GM10248 (cell line): ENCODE measurements at regions of chr7 and their contacts with region 1.

Region 1: DNA sequence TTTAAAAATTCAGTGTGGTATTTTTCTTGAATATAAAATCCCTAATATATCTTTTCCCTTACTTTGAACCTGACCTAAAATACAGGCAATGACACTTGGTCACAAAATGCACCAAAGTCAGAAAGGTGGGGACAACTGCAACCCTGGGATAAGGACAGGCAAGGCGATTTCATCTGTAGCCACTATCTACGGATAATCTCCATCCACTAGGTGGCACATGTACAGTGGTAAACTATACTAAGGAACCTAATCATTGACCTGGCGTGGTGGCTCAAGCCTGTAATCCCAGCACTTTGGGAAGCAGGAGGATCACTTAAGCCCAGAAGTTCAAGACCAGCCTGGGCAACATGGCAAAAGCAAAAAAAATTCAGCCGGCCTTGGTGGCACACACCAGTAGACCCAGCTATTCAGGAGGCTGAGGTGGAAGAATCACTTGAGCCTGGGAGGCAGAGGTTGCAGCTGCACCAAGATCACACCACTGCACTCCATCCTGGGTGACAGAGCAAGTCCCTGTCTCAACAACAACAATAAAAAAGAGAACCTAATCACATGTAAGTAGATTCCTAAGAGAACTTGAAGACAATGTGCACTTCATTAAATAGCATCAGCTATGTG is 98.9 kb downstream of the KMT2C start:
- DNase-seq: peak; percentile 35
- CTCF ChIP-seq: peak; percentile 62

Region 2: DNA sequence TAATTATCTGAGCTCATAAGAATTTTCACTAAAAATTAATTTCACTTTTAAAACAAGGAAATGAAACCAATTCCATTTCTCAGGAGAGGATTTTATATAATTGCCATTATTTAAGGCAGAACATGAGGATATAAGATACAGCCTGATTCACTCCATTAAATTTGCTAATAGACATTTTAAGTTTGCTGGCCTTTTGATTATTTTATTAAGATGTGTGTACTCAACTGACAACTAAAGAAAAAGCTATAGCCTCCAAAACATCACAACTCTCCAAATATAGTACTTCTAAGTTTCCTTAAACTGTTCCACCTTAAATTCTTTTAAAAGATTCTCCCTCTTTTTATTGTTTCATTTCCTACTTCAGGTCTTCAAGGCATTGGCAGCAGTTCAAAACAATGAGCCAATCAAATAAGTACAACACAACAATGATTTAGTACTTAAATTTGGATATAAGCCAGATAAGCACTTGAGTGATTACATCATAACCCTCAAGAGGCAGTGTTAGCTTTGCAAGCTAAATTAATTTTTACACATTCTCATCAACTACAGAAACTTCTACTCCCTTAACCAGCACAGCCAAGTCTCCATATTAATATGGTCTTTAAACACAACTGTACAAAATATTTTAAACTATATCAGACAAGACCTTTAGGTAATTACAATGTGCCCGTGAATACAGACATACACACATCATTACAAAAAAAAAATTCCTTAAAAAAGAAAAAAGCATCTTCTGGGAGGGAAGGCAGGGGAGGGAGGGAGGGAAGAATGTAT is 22.8 kb before region 1 on chr7:
- CTCF ChIA-PET with region 1: interaction called, 16 read pairs
- POLR2A ChIA-PET with region 1: no interaction called
- DNase-seq: no peak
- CTCF ChIP-seq: no peak

Region 3: GRCh38 chr7:152392254-152392653 is 55.4 kb after region 1 on chr7:
- CTCF ChIA-PET with region 1: interaction called, 11 read pairs
- POLR2A ChIA-PET with region 1: no interaction called
- DNase-seq: no peak
- CTCF ChIP-seq: no peak

Region 4: DNA sequence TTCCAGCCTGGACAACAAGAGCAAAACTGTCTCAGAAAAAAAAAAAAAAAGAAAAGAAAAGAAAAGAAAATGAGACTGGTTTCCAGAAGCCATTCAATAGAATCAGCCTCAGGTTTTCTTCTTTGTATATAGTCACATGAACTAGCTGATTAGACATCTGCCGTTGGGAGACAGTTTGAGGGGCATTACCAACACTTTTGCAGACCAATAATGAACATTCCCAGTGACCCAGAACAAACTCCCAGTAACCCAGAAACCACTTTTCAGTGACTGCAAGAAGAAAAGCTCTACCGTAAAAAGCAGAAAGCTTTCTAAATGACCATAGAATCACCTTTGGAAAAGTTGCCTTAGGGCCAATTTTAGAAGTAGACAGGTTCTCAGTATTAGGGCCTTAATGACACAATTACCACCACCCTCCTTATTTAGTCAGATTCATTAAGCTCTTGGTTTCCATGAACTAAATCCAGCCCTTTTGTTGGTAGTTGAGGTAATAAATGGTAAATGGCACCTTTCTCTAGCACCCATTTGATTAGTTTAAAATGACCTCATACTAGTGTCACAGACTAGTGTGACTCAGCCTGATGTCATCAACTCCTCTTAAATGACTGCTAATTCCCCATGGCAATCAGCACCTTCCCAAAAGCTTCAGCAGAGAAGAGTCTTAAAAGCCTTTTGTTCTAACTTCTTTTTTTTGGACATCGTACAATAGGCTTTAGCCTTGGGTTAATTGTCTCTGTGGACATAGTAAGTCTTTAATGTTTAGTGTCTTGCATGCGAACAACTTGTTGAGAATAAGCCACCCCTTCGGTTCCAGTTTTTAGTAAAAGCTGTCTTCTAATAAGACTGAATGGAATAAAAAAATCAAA is 372.7 kb after region 1 on chr7:
- CTCF ChIA-PET with region 1: interaction called, 15 read pairs
- POLR2A ChIA-PET with region 1: no interaction called
- DNase-seq: no peak
- CTCF ChIP-seq: no peak